Activated B cell treated with CpG ODN at 0.5 μM for 24 hours (primary cell): ENCODE measurements at regions of chr9 and their contacts with region 1.

Region 1: GRCh38 chr9:137551651-137552384 is at the start of gene MRPL41:
- DNase-seq: peak; percentile 83
- ATAC-seq: peak; percentile 85
- H3K4me3 Mint-ChIP-seq: peak within 1 kb of the TSS; percentile 83
- H3K27ac Mint-ChIP-seq: peak within 1 kb of the TSS; percentile 79
- H3K4me1 Mint-ChIP-seq: peaks cover 37% of the 10 kb centered on the region
- H3K27me3 Mint-ChIP-seq: no peaks in the 10 kb centered on the region
- CTCF ChIP-seq: no peak
- total RNA-seq, gene MRPL41: 26.0 and 32.9 TPM in 2 replicates

Region 2: DNA sequence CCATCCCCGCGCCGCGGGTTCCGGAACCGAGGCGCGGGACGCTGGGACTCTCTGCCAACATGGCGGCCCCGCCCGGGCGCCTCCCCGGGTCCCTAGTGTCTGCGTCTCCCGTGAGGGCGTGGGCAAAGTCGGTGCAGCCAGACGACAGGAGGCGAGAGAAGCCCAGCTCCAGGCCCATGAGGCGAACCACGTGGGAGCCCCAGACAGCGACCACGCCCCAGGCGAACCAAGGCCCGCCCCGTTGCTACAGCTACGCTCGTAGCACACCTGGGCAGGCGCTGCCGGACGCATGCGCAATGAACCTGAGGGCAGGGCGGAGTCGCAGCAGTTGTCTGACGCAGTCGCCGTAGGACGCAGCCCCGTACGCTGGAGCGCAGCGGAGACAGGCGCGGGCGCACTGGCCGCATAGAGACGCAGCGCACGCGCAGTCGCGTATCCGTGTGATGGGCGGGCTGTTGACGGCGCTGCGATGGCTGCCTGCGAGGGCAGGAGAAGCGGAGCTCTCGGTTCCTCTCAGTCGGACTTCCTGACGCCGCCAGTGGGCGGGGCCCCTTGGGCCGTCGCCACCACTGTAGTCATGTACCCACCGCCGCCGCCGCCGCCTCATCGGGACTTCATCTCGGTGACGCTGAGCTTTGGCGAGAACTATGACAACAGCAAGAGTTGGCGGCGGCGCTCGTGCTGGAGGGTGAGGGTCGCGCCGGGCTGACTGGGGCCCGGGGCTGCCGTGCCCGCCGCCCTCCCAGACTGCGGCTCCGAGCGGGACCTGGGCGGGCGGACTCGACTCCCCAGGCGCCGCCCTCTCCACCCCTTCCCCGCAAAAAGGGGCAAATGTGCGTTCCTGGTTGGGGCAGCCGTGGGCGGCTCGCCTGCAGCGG is 465.0 kb before region 1 on chr9 and contains the start of gene MAN1B1:
- CTCF ChIA-PET with region 1: no interaction called
- POLR2A ChIA-PET with region 1: no interaction called
- intact Hi-C with region 1: loop called (anchors 5 kb)
- DNase-seq: peak; percentile 98
- ATAC-seq: peak; percentile 77
- H3K4me3 Mint-ChIP-seq: peak within 1 kb of the TSS; percentile 93
- H3K27ac Mint-ChIP-seq: peak within 1 kb of the TSS; percentile 97
- H3K4me1 Mint-ChIP-seq: peaks cover 49% of the 10 kb centered on the region
- H3K27me3 Mint-ChIP-seq: no peaks in the 10 kb centered on the region
- CTCF ChIP-seq: no peak
- total RNA-seq, gene MAN1B1: 33.6 and 37.7 TPM in 2 replicates

Region 3: GRCh38 chr9:137534256-137535117 is 17.3 kb before region 1 on chr9:
- CTCF ChIA-PET with region 1: interaction called, 5 read pairs
- POLR2A ChIA-PET with region 1: interaction called, 12 read pairs
- intact Hi-C with region 1: loop called (anchors 2 kb)
- DNase-seq: no peak
- ATAC-seq: peak; percentile 74
- H3K4me3 Mint-ChIP-seq: no peak overlapping the region
- H3K27ac Mint-ChIP-seq: peak overlapping the region; percentile 32
- H3K4me1 Mint-ChIP-seq: peaks cover 37% of the 10 kb centered on the region
- H3K27me3 Mint-ChIP-seq: no peaks in the 10 kb centered on the region
- CTCF ChIP-seq: no peak

Region 4: DNA sequence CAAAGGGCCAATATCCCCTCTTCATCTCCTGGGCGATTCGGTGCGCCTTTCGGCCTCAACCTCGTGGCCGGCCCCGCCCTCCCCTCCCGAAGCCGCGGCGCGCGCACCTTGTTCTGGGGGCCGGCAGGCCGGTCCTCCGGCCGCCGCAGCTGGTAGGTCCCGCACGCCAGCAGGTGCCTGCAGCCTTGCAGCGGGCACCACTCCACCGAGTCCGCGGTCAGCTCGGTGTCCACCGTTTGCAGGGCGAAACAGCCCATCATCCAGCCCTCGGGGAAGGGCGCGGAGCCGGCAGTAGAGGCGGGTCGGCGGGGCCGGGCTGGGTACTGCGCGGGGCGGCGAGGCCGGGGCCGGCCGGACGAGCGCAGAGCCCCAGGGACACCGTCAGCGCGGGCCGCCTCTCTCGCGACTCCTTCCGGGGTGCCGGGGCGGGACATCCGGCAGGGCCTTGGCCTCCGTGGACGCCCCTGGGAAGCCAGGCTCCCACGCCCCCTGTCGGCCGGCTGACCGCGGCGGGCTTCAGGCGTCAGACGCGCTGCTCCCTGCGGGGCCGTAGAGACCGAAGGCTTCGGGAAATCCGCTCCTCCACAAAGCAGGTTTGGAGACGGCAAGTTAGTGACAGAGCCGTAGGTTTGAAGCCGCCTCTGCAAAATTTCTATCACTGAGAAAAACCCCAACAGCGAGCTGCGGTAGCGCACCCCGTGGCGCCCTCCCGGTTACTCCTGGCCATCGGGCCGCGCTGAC is 26.9 kb after region 1 on chr9 and contains the start of gene DPH7:
- CTCF ChIA-PET with region 1: interaction called, 4 read pairs
- POLR2A ChIA-PET with region 1: interaction called, 9 read pairs
- intact Hi-C with region 1: loop called (anchors 2 kb)
- DNase-seq: peak; percentile 98
- ATAC-seq: peak; percentile 97
- H3K4me3 Mint-ChIP-seq: peak within 1 kb of the TSS; percentile 82
- H3K27ac Mint-ChIP-seq: peak within 1 kb of the TSS; percentile 35
- H3K4me1 Mint-ChIP-seq: peaks cover 41% of the 10 kb centered on the region
- H3K27me3 Mint-ChIP-seq: no peaks in the 10 kb centered on the region
- CTCF ChIP-seq: peak; percentile 59
- total RNA-seq, gene DPH7: 39.4 and 43.0 TPM in 2 replicates

Region 5: GRCh38 chr9:137590462-137591383 is 38.9 kb after region 1 on chr9 and contains the start of gene ZMYND19:
- CTCF ChIA-PET with region 1: no interaction called
- POLR2A ChIA-PET with region 1: interaction called, 6 read pairs
- intact Hi-C with region 1: loop called (anchors 5 kb)
- DNase-seq: peak; percentile 95
- ATAC-seq: peak; percentile 96
- H3K4me3 Mint-ChIP-seq: peak within 1 kb of the TSS; percentile 98
- H3K27ac Mint-ChIP-seq: peak within 1 kb of the TSS; percentile 92
- H3K4me1 Mint-ChIP-seq: peaks cover 6% of the 10 kb centered on the region
- H3K27me3 Mint-ChIP-seq: peaks cover 1% of the 10 kb centered on the region
- CTCF ChIP-seq: no peak
- total RNA-seq, gene ZMYND19: 21.9 and 25.1 TPM in 2 replicates

Region 6: DNA sequence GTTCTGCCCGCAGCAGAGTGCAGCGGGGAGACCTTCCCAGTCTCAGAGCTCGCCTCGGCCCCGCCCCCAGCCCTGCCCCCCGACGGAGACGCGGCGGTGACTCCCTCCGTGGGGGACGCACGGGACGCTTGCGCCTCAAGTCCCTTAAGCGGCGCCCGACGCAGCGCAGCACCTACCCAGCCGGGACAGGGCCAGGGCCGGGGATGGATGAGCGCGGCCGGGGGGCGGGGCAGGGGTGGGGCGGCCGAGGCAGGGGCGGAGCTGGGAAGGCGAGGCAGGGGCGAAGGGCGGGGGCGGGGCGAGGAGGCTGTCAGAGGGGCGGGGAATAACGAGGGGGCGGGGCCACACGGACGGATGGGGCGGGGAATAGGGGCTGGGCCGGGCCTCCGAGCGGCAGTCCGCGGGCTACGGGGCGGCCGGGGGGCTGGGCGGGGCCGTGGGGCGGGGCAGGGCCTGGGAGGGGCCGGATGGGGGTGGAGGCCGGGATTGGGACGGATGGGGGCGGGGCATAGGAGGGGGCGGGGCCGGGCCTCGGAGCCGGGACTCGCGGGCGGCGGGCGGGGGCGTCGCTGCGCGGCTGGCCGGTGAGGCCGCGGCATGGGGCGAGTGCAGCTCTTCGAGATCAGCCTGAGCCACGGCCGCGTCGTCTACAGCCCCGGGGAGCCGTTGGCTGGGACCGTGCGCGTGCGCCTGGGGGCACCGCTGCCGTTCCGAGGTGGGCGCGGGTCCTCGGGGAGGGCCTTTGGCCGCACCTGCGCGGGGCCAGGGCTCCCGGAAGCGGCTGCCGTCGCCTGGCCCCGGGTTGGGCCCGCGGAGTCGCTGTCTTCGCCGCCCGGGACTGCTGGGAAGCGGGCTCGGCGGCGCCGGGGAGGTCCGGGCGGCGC is 53.5 kb after region 1 on chr9 and contains the start of gene ARRDC1:
- CTCF ChIA-PET with region 1: no interaction called
- POLR2A ChIA-PET with region 1: interaction called, 7 read pairs
- intact Hi-C with region 1: loop called (anchors 1 kb)
- DNase-seq: peak; percentile 82
- ATAC-seq: peak; percentile 89
- H3K4me3 Mint-ChIP-seq: peak within 1 kb of the TSS; percentile 75
- H3K27ac Mint-ChIP-seq: no peak within 1 kb of the TSS
- H3K4me1 Mint-ChIP-seq: peaks cover 17% of the 10 kb centered on the region
- H3K27me3 Mint-ChIP-seq: no peaks in the 10 kb centered on the region
- CTCF ChIP-seq: no peak
- total RNA-seq, gene ARRDC1: 56.9 and 58.3 TPM in 2 replicates

Region 7: DNA sequence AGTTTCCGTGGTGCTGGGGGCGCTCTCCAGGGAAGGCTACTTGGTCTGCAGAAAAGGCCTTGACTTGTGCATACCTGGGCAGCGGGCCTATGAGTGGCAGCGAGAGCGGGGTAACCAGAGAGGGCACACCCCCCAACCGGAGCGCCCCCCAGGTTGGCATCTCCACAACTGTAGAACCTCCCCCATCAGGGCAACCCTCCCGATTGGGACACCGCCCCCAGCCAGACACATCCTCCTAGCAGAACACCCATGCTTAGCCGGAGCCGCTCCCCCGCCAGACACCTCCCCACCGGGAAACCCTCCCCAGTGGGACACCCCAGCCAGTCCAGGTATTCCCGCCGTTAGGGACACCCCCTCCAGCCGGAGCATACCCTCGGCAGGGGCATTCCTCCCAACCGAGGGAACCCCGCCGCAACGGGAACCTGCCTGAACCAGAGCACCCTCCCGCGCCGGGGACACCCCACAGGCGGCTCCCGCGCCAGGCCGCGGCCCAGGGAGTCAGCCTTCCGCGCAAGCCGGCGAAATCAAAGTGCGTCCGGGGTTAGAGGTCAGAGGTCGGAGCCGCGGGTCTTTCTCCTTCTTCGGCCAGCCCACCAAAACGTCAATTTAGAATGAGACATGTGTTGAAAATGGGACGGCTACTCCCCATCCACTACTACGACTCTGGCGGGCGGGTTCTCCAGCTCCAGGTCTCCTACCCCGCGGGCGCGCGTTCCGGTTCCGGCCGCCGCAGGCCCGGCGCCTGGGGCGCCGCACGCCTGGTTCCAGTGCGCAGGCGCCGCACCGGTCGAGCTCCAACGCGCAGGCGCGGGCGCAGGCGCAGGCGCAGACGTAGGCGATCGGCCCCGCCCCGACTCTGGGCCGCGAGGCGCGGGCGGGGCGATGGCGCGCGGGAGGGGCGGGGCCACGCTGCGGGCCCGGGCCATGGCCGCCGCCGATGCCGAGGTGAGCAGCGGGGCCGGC is 66.6 kb after region 1 on chr9 and contains the start of gene EHMT1:
- CTCF ChIA-PET with region 1: no interaction called
- POLR2A ChIA-PET with region 1: interaction called, 8 read pairs
- intact Hi-C with region 1: loop called (anchors 1 kb)
- DNase-seq: peak; percentile 98
- ATAC-seq: peak; percentile 89
- H3K4me3 Mint-ChIP-seq: peak within 1 kb of the TSS; percentile 91
- H3K27ac Mint-ChIP-seq: peak within 1 kb of the TSS; percentile 92
- H3K4me1 Mint-ChIP-seq: peaks cover 45% of the 10 kb centered on the region
- H3K27me3 Mint-ChIP-seq: no peaks in the 10 kb centered on the region
- CTCF ChIP-seq: no peak
- total RNA-seq, gene EHMT1: 157 and 163 TPM in 2 replicates